ENCODE measurements at regions of chr16 and their contacts with region 1.

Region 1: DNA sequence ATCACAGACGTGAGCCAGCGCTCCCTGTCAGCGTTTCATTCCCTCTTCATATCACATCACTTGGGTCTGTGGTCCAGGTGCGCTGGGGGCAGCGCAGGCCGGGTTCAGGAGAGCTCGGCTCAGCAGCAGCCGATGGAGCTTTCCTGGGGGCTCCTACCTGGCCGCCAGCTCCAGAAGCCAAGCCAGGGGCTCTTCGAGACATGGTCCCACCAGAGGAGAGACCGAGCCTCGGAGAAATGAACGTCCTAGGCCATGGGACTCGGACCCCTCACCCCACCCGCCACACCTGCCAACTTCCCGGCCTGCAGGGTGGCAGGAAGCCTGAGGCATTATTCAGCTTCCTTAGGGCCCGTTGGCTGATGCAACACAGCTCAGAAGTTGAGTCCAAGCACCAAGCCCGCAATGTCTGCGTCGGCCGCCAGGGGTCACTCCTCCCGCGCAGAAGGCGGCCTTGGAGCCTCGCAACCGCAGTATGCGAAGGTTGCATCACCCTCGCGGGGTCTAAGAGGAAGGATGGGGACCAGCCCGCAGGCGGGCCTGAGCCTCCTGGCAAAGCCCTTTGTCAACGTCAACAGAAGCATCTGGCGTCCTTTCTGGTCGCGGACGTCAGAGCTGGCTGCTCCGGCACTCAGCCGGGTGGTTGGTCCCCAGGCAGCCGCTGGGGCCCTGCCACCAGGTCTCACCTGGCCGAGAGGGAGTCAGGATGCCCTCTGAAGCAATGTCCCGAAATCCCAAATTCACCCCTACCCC is 13.2 kb upstream of the KLHDC4 start:
- DNase-seq: peak; percentile 67 to 84
- ATAC-seq: peak; percentile 79 to 90
- H3K4me3 ChIP-seq: no peak overlapping the region
- H3K27ac ChIP-seq: peak overlapping the region in 2 of 4 donors; percentile 15 to 21
- H3K4me1 ChIP-seq: peaks cover 5 to 10% of the 10 kb centered on the region in 2 donors
- H3K27me3 ChIP-seq: peaks cover 0 to 3% (median 0%) of the 10 kb centered on the region in 3 donors
- CTCF ChIP-seq: peak; percentile 96 to 100 (median 97)
- POLR2A ChIP-seq: no peak

Region 2: DNA sequence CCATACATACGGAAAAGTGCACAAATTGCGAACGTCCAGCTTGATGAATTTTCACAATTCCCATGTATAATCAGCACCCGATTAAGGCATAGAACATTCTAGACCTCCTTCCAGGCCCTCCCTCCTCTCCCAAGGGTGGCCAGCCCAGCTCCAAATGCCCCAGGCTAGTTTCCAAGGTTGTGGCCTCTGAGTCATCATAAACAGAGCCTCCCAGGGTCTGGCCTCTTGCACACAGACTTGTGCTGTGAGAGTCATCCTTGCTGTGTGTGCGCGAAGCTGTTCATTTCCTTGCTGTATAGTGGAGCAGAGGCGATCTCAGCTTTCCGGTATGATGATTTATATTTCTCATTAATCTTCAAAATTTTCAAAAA is 197.2 kb before region 1 on chr16:
- in situ Hi-C with region 1: loop called in 1 of 4 experiments (anchors 10 kb)
- intact Hi-C with region 1: no loop called
- DNase-seq: peak; percentile 52 to 66
- ATAC-seq: peak; percentile 90 to 92
- H3K4me3 ChIP-seq: peak overlapping the region in 2 of 4 donors; percentile 12 to 22
- H3K27ac ChIP-seq: peak overlapping the region; percentile 65 to 76 (median 68)
- H3K4me1 ChIP-seq: peaks cover 8 to 11% of the 10 kb centered on the region in 2 donors
- H3K27me3 ChIP-seq: peaks cover 0 to 27% (median 10%) of the 10 kb centered on the region in 3 donors
- CTCF ChIP-seq: no peak
- POLR2A ChIP-seq: no peak

Region 3: GRCh38 chr16:87815567-87815966 is 36.6 kb after region 1 on chr16:
- in situ Hi-C with region 1: no loop called
- intact Hi-C with region 1: loop called (anchors 5 kb)
- DNase-seq: peak in 1 of 2 donors; percentile 40
- ATAC-seq: peak; percentile 75 to 88
- H3K4me3 ChIP-seq: no peak overlapping the region
- H3K27ac ChIP-seq: peak overlapping the region in 1 of 4 donors; percentile 13
- H3K4me1 ChIP-seq: no peaks in the 10 kb centered on the region
- H3K27me3 ChIP-seq: no peaks in the 10 kb centered on the region
- CTCF ChIP-seq: peak in 2 of 5 experiments; percentile 32 to 55
- POLR2A ChIP-seq: no peak

Region 4: DNA sequence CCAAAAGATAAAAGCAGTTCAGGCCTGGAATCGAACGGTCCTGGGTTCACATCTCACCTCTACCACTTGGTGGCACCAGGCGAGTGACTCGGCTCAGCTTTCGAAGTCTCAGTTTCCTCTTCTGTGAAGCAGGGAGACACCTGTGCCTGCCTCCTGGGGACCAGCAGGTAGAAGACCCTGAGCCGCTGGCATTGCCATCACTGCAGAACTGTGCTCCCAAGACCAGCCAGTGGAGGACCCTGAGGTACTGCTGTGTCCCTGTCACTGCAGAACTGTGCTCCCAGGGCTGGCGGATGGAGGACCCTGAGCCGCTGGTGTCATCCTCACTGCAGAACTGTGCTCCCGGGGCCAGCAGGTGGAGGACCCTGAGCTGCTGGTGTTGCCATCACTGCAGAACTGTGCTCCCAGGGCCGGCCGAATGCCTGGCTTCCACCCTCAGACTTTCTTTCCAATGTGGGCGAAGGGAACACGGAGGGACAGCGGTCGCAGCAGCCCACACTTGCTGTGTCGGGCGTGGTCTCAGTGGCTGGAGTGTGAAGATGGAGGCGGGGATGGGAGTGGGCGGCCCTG is 99.0 kb after region 1 on chr16:
- in situ Hi-C with region 1: loop called (anchors 5 to 25 kb)
- intact Hi-C with region 1: no loop called
- DNase-seq: no peak
- ATAC-seq: no peak
- H3K4me3 ChIP-seq: no peak overlapping the region
- H3K27ac ChIP-seq: no peak overlapping the region
- H3K4me1 ChIP-seq: no peaks in the 10 kb centered on the region
- H3K27me3 ChIP-seq: no peaks in the 10 kb centered on the region
- CTCF ChIP-seq: peak in 2 of 5 experiments; percentile 15 to 28
- POLR2A ChIP-seq: no peak

Region 5: GRCh38 chr16:87895641-87896141 is 116.7 kb after region 1 on chr16:
- in situ Hi-C with region 1: loop called in 2 of 4 experiments (anchors 10 to 25 kb)
- intact Hi-C with region 1: no loop called
- DNase-seq: no peak
- ATAC-seq: no peak
- H3K4me3 ChIP-seq: no peak overlapping the region
- H3K27ac ChIP-seq: no peak overlapping the region
- H3K4me1 ChIP-seq: peaks cover 6 to 18% of the 10 kb centered on the region in 2 donors
- H3K27me3 ChIP-seq: no peaks in the 10 kb centered on the region
- CTCF ChIP-seq: no peak
- POLR2A ChIP-seq: no peak

Region 6: DNA sequence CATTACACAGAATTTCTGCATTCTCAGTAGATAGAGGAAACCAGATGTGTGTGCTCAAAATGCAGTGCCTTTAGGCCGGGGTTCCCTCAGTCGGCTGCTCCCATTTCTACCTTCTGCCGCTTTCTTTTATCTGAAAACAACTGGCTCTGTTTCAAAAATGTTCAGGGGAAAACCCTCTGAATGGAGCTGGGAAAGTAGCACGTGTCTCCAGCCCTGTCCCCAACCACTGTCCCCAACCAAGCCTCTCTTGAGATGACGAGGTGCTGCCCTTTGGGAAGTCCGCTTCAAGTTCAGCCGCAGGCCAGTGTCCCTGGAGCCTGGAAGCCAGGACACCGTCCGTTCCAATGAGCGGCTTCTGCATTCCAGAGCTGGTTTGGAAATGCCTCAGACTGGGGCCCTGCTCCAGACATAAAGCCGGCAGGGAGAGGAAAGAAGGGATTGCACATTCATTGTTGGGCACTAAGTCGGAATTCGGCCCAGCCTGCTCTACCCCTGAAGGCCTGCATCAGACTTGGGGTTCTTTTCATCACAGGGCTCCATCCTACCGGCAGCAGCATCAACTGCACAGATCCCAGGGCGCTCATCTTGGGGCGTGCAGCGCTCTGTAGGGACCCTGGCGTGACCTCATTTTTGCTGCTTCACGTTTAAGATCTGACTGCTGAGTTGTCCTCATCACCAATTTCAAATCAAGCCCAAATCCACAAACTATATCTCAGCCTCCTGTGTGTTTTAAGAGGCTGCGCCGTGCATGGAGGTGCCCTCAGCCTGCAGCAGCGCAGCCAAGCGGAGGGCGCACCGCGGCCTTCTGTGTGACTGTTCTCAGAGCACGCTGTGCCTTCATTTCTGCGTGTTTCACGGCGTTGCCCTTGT is 283.6 kb after region 1 on chr16:
- in situ Hi-C with region 1: no loop called
- intact Hi-C with region 1: no loop called
- DNase-seq: peak in 1 of 2 donors; percentile 38
- ATAC-seq: peak; percentile 56 to 57
- H3K4me3 ChIP-seq: no peak overlapping the region
- H3K27ac ChIP-seq: peak overlapping the region in 1 of 4 donors; percentile 25
- H3K4me1 ChIP-seq: peaks cover 7 to 16% of the 10 kb centered on the region in 2 donors
- H3K27me3 ChIP-seq: no peaks in the 10 kb centered on the region
- CTCF ChIP-seq: no peak
- POLR2A ChIP-seq: no peak

Region 7: DNA sequence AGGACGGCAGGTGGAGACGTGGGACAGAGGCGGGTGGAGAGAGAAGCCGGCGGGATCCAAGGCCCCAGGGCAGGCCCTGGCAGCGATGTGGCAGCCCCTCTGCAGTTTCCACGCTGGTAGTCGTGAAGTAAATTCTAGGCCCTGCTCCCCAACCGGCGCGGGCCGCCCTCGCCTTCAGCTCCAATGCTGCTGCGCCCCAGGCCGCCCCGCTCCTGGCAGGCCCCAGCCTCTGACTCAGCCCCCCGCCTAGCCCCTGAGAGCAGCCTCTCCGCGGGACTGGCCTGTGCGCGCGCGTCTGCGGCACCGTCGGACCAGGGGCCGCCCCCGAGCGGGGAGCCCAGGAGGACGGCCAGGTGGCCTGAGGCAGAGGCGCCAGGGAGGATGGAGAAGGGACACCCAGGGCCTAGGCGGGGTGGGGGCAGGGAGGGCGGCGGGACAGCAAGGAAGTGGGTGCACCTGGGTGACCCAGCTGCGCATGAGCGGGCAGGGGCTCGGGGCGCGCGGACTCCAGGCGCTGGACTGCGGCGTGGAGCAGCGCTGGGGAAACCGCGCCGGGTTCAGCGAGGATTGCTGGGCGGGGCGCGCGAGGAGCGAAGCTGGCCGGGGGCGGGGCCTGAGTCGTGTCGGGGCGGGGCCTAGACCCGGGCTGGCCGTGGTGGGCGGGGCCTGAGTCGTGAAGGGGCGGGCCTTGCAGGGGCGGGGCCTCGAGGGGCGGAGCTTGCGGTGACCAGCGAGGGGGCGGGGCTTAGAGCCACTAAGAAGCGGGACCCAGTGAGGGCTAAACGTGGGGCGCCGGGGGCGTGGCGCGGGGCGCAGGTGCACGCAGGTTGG is 1468.1 kb after region 1 on chr16:
- in situ Hi-C with region 1: no loop called
- intact Hi-C with region 1: no loop called
- DNase-seq: peak; percentile 78 to 81
- ATAC-seq: peak; percentile 83 to 89
- H3K4me3 ChIP-seq: peak overlapping the region; percentile 44 to 77 (median 52)
- H3K27ac ChIP-seq: no peak overlapping the region
- H3K4me1 ChIP-seq: peaks cover 3 to 9% of the 10 kb centered on the region in 2 donors
- H3K27me3 ChIP-seq: peaks cover 9 to 16% (median 11%) of the 10 kb centered on the region in 3 donors
- CTCF ChIP-seq: no peak
- POLR2A ChIP-seq: no peak